Esophagus muscularis mucosa (tissue), 4 donors: ENCODE measurements at regions of chr11 and their contacts with region 1.

Region 1: GRCh38 chr11:73787643-73788537 is at the start of gene MRPL48:
- DNase-seq: peak; percentile 97
- H3K4me3 ChIP-seq: peak within 1 kb of the TSS; percentile 67 to 97 (median 72)
- H3K27ac ChIP-seq: peak within 1 kb of the TSS; percentile 72 to 90 (median 88)
- H3K4me1 ChIP-seq: peaks cover 11 to 22% (median 18%) of the 10 kb centered on the region in 4 donors
- H3K27me3 ChIP-seq: no peaks in the 10 kb centered on the region
- CTCF ChIP-seq: peak in 1 of 3 experiments; percentile 26
- EP300 ChIP-seq: no peak
- POLR2A ChIP-seq: no peak
- total RNA-seq, gene MRPL48: 8.9 to 18.4 (median 11.5) TPM

Region 2: DNA sequence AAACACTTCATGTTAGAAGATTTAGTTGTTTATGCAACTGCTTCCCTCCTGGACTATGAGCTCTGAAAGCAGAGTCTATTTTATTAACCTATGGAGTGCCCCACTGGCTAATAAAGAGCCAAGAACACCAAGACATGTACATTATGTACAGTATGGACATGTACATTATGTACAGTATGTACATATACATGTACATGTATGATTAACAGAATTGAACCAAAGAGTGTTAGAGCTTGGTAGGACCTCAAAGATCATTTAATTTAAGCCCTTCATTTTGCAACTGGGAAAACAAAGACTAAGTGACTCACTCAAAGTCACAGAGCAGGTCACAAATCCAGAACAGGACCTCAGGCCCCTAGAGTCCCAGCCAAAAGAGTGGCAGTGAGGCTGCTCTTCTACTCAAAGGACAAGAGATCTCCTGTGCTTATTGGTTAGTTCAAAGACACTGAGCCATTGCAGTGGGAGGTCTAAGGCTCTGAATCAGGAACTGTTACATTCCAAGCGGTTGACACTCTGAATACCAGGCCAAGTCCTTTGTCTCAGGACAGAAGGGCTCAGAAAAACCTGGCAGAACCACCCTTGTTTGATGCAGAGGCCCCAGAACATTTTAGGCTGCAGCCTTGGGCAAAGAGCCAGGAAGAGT is 293.8 kb before region 1 on chr11:
- intact Hi-C with region 1: no loop called
- DNase-seq: no peak
- H3K4me3 ChIP-seq: no peak overlapping the region
- H3K27ac ChIP-seq: no peak overlapping the region
- H3K4me1 ChIP-seq: peaks cover 8 to 11% (median 10%) of the 10 kb centered on the region in 4 donors
- H3K27me3 ChIP-seq: no peaks in the 10 kb centered on the region
- CTCF ChIP-seq: no peak
- EP300 ChIP-seq: no peak
- POLR2A ChIP-seq: no peak

Region 3: GRCh38 chr11:73716101-73717056 is 71.5 kb before region 1 on chr11:
- intact Hi-C with region 1: no loop called
- DNase-seq: no peak
- H3K4me3 ChIP-seq: no peak overlapping the region
- H3K27ac ChIP-seq: no peak overlapping the region
- H3K4me1 ChIP-seq: peaks cover 0 to 11% (median 4%) of the 10 kb centered on the region in 4 donors
- H3K27me3 ChIP-seq: no peaks in the 10 kb centered on the region
- CTCF ChIP-seq: no peak
- EP300 ChIP-seq: no peak
- POLR2A ChIP-seq: no peak

Region 4: GRCh38 chr11:73876424-73877300 is 88.8 kb after region 1 on chr11 and contains the starts of genes COA4 and PAAF1:
- intact Hi-C with region 1: loop called (anchors 5 kb)
- DNase-seq: peak; percentile 98
- H3K4me3 ChIP-seq: peak within 1 kb of the TSS; percentile 72 to 93 (median 82)
- H3K27ac ChIP-seq: peak within 1 kb of the TSS; percentile 84 to 92 (median 86)
- H3K4me1 ChIP-seq: peaks cover 16 to 37% (median 31%) of the 10 kb centered on the region in 4 donors
- H3K27me3 ChIP-seq: no peaks in the 10 kb centered on the region
- CTCF ChIP-seq: no peak
- EP300 ChIP-seq: no peak
- POLR2A ChIP-seq: no peak
- total RNA-seq, gene COA4: 53.3 to 73.2 (median 57.5) TPM
- total RNA-seq, gene PAAF1: 12.5 to 19.6 (median 18.1) TPM